ENCODE measurements at regions of chr1 and their contacts with region 1.

Region 1: GRCh38 chr1:89762779-89763648 is 57.8 kb upstream of the LRRC8D start:
- DNase-seq: peak; percentile 65 to 96
- H3K4me3 ChIP-seq: peak overlapping the region; percentile 2
- CTCF ChIP-seq: peak in 1 of 3 donors; percentile 88
- POLR2A ChIP-seq: no peak

Region 2: GRCh38 chr1:89483010-89483756 is 279.8 kb before region 1 on chr1:
- intact Hi-C with region 1: loop called (anchors 10 kb)
- DNase-seq: peak; percentile 78 to 92
- H3K4me3 ChIP-seq: no peak overlapping the region
- CTCF ChIP-seq: no peak
- POLR2A ChIP-seq: no peak

Region 3: DNA sequence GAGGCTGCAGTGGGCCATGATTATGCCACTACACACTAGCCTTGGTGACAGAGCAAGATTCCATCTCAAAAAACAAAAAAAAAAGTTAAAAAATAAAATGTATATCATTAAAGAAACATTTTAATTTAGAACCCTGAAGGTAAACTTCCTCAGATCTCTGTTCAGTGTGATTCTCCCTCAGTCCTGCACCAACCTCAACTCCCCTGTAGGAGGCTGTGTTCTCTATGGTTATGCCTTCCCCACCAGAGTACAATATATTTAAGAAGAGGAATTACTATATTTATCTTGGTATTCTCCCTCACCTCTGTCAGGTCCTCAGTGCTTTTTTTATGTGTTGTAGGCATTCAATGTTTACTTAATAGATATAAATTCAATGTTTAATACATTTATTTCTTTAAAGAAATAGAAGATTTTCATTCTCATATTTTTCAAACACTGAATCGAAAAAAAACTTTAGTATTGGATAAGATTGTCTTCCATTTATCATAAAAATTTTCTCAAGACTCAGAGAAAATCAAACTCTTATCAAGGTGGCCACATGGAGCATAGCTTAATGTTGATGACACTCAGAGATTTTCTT is 243.1 kb before region 1 on chr1:
- intact Hi-C with region 1: loop called (anchors 10 kb)
- DNase-seq: no peak
- H3K4me3 ChIP-seq: no peak overlapping the region
- CTCF ChIP-seq: no peak
- POLR2A ChIP-seq: no peak

Region 4: DNA sequence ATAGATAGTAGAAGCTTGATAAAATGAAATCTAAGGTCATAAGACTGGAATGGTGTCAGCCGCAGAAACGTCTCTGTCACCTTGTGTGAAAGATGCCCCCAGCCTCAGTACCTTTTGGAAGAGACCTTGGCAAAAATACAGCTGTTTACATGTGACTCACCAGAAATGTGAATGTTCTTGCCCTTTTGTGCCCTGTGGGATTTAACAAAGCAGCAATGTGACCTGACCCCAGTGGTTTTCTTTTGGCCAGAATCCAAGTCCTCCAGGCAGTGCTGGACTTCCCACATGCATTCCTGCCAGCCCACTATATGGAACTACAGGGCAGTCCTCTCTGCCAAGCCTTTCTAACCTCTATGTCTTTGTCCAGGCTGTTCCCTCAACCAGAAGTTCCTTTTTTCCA is 157.3 kb before region 1 on chr1:
- intact Hi-C with region 1: loop called (anchors 10 kb)
- DNase-seq: no peak
- H3K4me3 ChIP-seq: no peak overlapping the region
- CTCF ChIP-seq: no peak
- POLR2A ChIP-seq: no peak

Region 5: GRCh38 chr1:89670163-89670562 is 92.9 kb before region 1 on chr1:
- intact Hi-C with region 1: no loop called
- DNase-seq: no peak
- H3K4me3 ChIP-seq: no peak overlapping the region
- CTCF ChIP-seq: no peak
- POLR2A ChIP-seq: no peak

Measured in lower leg skin (tissue), 4 donors.